ENCODE measurements at regions of chr9 and their contacts with region 1.

Region 1: GRCh38 chr9:68999393-69000105 is 14.4 kb downstream of the PRKACG start:
- DNase-seq: peak; percentile 79
- H3K4me3 Mint-ChIP-seq: no peak overlapping the region
- H3K27ac Mint-ChIP-seq: no peak overlapping the region
- H3K4me1 Mint-ChIP-seq: peaks cover 18% of the 10 kb centered on the region
- H3K27me3 Mint-ChIP-seq: no peaks in the 10 kb centered on the region

Region 2: GRCh38 chr9:68584189-68585033 is 415.1 kb before region 1 on chr9:
- CTCF ChIA-PET with region 1: interaction called, 14 read pairs
- intact Hi-C with region 1: loop called (anchors 1 kb)
- DNase-seq: peak; percentile 93
- H3K4me3 Mint-ChIP-seq: no peak overlapping the region
- H3K27ac Mint-ChIP-seq: no peak overlapping the region
- H3K4me1 Mint-ChIP-seq: no peaks in the 10 kb centered on the region
- H3K27me3 Mint-ChIP-seq: peaks cover 2% of the 10 kb centered on the region

Region 3: GRCh38 chr9:68685770-68686169 is 313.8 kb before region 1 on chr9:
- CTCF ChIA-PET with region 1: interaction called, 4 read pairs
- intact Hi-C with region 1: loop called (anchors 1 kb)
- DNase-seq: peak; percentile 61
- H3K4me3 Mint-ChIP-seq: no peak overlapping the region
- H3K27ac Mint-ChIP-seq: no peak overlapping the region
- H3K4me1 Mint-ChIP-seq: peaks cover 5% of the 10 kb centered on the region
- H3K27me3 Mint-ChIP-seq: peaks cover 16% of the 10 kb centered on the region

Region 4: GRCh38 chr9:68704814-68705530 is 294.6 kb before region 1 on chr9 and contains the start of gene PIP5K1B:
- CTCF ChIA-PET with region 1: interaction called, 3 read pairs
- intact Hi-C with region 1: loop called (anchors 1 kb)
- DNase-seq: peak; percentile 62
- H3K4me3 Mint-ChIP-seq: peak within 1 kb of the TSS; percentile 82
- H3K27ac Mint-ChIP-seq: no peak within 1 kb of the TSS
- H3K4me1 Mint-ChIP-seq: peaks cover 17% of the 10 kb centered on the region
- H3K27me3 Mint-ChIP-seq: peaks cover 68% of the 10 kb centered on the region
- total RNA-seq, gene PIP5K1B: 0.38 to 0.42 TPM

Region 5: DNA sequence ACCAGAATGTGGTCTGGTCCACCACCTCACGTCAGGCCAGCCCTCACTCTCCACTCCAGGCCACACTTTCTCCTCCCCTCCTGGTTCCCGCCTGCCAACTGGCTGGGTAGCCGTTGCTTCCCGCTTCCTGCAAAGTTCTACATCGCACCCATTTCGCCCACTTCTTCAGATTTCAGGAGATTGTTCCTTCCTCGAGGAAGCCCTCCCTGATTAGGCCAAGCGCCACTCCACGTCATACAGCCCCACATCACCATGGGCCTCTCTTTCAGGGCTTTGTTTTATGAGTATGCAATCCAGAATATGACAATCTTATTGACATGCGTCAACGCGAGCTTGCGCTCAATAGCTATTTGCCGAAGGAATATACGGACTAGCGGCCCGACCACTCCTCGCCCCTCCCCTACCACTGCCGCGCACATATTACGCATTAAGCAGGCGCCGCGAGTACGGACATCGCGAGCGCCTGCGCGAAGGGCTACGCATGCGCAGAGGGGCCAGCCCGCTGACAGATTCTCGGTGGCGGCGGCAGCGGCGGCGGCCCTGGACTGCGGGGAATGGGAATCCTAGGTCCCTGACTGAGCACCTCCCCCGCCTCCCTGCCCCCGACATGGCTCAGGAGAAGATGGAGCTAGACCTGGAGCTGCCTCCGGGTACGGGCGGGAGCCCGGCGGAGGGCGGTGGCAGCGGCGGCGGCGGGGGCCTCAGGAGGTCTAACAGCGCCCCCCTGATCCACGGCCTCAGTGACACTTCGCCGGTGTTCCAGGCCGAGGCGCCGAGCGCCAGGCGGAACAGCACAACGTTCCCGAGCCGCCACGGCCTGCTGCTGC is 219.8 kb before region 1 on chr9:
- CTCF ChIA-PET with region 1: interaction called, 4 read pairs
- intact Hi-C with region 1: loop called (anchors 1 kb)
- DNase-seq: peak; percentile 96
- H3K4me3 Mint-ChIP-seq: no peak overlapping the region
- H3K27ac Mint-ChIP-seq: no peak overlapping the region
- H3K4me1 Mint-ChIP-seq: peaks cover 8% of the 10 kb centered on the region
- H3K27me3 Mint-ChIP-seq: no peaks in the 10 kb centered on the region

Region 6: DNA sequence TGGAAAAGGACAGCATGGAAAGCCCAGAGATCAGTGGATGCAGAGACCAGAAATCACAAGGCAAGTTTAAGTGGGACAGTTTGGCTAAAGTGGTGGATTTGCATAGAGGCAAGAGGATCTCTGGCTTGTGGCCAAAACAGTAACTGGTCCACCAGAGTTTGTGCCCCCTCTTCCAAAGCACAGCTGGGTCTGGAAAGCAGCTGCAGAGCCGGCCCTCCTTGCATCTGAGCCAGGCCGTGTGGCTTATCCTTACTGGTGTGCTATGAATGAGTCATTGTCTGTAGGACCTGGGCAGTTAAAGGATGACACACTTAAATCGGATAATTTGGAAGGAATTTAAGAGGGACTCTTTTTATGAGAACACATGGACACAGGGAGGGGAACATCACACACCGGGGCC is 147.9 kb before region 1 on chr9:
- CTCF ChIA-PET with region 1: interaction called, 3 read pairs
- intact Hi-C with region 1: loop called (anchors 5 kb)
- DNase-seq: no peak
- H3K4me3 Mint-ChIP-seq: no peak overlapping the region
- H3K27ac Mint-ChIP-seq: no peak overlapping the region
- H3K4me1 Mint-ChIP-seq: no peaks in the 10 kb centered on the region
- H3K27me3 Mint-ChIP-seq: no peaks in the 10 kb centered on the region

Region 7: GRCh38 chr9:69027355-69028096 is 28.0 kb after region 1 on chr9:
- CTCF ChIA-PET with region 1: interaction called, 6 read pairs
- intact Hi-C with region 1: loop called (anchors 1 kb)
- DNase-seq: peak; percentile 65
- H3K4me3 Mint-ChIP-seq: no peak overlapping the region
- H3K27ac Mint-ChIP-seq: no peak overlapping the region
- H3K4me1 Mint-ChIP-seq: peaks cover 36% of the 10 kb centered on the region
- H3K27me3 Mint-ChIP-seq: no peaks in the 10 kb centered on the region